Calu3 (cell line): ENCODE measurements at regions of chr6 and their contacts with region 1.

Region 1: DNA sequence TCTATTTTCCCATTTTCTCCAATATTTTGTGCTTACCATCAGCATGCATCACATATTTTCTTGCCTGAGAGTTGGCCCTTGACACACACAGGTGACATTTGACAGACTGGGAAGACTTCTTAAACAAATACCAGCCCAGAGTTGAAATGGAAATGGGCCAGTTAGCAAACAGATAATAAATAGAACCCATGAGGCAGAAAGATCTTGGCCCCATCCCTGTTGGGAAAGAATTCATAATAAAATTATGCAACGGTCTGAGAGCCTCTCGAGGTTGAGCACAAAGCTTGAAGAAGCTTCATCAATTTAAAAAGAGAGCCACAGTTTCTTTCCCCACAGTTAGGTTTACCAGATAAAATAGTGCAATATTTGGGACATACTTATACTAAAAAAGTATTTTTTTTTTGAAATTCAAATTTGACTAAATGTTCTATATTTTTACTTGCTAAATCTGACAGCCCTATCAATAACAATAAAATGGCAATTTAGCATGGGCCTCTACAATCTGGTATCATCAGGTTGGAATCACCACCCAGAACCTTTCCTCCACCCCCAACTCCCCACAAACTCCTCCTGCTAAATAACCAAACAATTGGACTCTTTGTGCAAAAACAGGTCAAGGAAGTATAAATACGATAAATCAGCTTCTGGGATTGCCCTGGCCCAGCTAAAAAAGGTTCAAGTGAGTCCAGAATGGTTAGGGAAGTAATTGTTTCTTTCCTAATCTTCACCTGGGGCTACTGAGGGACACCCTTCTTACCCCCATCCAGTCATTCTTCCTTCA is 129.8 kb downstream of the CD164 start:
- DNase-seq: peak; percentile 27
- H3K4me3 Mint-ChIP-seq: no peak overlapping the region
- H3K27ac Mint-ChIP-seq: no peak overlapping the region
- H3K4me1 Mint-ChIP-seq: peaks cover 17% of the 10 kb centered on the region
- H3K27me3 Mint-ChIP-seq: no peaks in the 10 kb centered on the region
- CTCF ChIP-seq: no peak

Region 2: DNA sequence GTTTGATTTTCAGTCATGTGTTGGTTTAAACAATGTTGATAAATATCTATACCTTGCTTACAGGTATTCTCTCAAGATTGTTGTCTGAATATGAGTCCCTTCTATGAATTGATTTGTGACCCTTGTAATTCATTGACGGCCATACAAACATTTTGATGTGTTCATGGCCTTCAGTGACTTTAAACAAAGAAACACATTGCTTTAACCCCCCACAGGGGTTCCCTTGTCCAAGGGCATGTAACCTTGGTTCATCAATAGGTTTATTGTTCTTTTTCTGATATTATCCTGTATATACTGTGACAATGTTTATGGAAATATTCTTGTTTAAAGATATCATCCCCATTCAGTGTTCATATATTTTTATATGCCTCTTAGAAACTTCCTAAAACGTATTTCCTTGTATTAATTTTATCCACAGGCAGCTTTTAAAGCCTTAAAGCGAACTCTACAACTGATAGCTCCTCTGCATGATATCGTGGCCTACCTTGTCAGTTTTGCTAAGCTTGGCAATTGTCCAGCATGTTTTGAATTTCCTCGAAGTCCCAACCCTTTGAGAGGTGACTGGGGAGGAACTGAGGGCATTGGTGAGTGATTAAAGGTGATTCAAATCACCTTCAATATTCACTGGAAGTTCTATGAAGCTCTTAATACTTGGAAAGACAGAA is 42.8 kb after region 1 on chr6:
- CTCF ChIA-PET with region 1: no interaction called
- intact Hi-C with region 1: loop called (anchors 2 kb)
- DNase-seq: no peak
- H3K4me3 Mint-ChIP-seq: no peak overlapping the region
- H3K27ac Mint-ChIP-seq: peak overlapping the region; percentile 45
- H3K4me1 Mint-ChIP-seq: peaks cover 50% of the 10 kb centered on the region
- H3K27me3 Mint-ChIP-seq: no peaks in the 10 kb centered on the region
- CTCF ChIP-seq: no peak